ENCODE measurements at regions of chr16 and their contacts with region 1.

Region 1: DNA sequence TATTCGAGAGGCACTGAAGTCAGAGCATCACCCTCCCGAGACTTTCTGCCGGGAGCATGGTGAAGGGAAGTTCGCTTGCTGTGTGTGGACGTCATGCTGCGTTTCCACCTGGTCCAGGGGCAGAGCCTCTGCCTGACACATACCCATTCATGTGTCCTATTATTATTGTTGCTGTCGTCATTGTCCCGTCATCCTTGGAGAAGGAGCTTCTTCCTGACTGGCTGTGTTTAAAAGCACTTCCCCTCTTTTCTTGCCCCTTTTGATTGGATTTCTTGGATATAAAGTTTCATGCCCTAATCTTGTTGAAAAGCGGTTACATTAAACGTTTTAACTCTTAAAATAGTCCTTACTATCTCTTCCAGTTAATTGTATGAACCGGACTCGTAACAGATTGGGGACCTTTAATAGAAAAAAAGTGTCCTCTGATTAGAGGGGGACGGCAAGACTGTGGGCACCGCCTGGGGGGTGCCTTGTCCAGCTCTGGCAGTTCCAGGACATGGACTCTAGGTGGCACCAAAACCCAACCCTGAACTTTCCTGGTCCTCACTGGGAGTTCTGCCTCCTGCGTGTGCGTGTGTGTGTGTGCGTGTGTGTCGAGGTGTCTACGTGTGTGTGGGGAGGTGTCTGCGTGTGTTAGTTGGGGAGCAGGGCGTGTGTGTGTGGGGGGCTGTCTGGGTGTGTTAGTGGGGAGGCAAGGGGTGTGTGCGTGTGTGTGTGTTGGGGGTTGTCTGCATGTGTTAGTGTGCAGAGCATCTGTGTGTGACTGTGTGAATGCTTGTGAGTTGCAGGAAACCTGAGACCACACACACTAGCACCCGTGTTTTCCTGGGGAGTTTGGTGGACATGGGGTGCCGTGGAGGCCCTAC is 133.3 kb upstream of the CIBAR2 start:
- ATAC-seq: peak; percentile 44 to 94 (median 54)
- H3K4me3 ChIP-seq: no peak overlapping the region
- H3K27ac ChIP-seq: peak overlapping the region in 1 of 2 donors; percentile 13
- H3K4me1 ChIP-seq: peaks cover 42 to 57% of the 10 kb centered on the region in 2 donors

Region 2: DNA sequence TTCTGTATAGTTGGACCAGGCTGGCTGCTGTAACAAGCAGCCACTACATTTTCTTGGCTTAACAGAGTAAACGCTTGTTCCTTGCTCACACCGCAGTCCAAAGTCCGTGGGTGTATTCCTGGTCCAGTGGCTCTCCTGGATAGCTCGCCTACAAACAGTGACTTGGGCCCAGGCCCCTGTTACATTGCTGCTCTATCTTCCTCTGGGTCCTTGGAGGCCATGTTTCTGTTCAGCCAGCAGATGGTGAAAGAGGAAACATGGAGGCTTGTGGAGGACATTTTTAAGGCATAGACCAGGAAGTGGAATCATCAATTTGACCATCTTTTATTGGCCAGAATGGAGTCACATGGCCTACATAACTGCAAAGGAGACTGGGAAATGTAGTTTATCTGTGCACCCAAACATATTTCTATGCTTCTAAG is 822.1 kb before region 1 on chr16:
- in situ Hi-C with region 1: no loop called
- ATAC-seq: peak in 5 of 8 experiments; percentile 48 to 77 (median 76)
- H3K4me3 ChIP-seq: no peak overlapping the region
- H3K27ac ChIP-seq: no peak overlapping the region
- H3K4me1 ChIP-seq: peaks cover 0 to 2% of the 10 kb centered on the region in 2 donors

Region 3: GRCh38 chr16:85017151-85017550 is 228.4 kb before region 1 on chr16:
- in situ Hi-C with region 1: no loop called
- ATAC-seq: peak in 1 of 8 experiments; percentile 11
- H3K4me3 ChIP-seq: no peak overlapping the region
- H3K27ac ChIP-seq: no peak overlapping the region
- H3K4me1 ChIP-seq: peaks cover 0 to 3% of the 10 kb centered on the region in 2 donors

Region 4: GRCh38 chr16:85114909-85115567 is 130.5 kb before region 1 on chr16:
- in situ Hi-C with region 1: loop called in 1 of 9 experiments (anchors 25 kb)
- ATAC-seq: peak; percentile 50 to 95 (median 56)
- H3K4me3 ChIP-seq: no peak overlapping the region
- H3K27ac ChIP-seq: no peak overlapping the region
- H3K4me1 ChIP-seq: peaks cover 16 to 23% of the 10 kb centered on the region in 2 donors

Measured in motor neuron (in vitro differentiated cells).